ENCODE measurements at regions of chr19 and their contacts with region 1.

Region 1: DNA sequence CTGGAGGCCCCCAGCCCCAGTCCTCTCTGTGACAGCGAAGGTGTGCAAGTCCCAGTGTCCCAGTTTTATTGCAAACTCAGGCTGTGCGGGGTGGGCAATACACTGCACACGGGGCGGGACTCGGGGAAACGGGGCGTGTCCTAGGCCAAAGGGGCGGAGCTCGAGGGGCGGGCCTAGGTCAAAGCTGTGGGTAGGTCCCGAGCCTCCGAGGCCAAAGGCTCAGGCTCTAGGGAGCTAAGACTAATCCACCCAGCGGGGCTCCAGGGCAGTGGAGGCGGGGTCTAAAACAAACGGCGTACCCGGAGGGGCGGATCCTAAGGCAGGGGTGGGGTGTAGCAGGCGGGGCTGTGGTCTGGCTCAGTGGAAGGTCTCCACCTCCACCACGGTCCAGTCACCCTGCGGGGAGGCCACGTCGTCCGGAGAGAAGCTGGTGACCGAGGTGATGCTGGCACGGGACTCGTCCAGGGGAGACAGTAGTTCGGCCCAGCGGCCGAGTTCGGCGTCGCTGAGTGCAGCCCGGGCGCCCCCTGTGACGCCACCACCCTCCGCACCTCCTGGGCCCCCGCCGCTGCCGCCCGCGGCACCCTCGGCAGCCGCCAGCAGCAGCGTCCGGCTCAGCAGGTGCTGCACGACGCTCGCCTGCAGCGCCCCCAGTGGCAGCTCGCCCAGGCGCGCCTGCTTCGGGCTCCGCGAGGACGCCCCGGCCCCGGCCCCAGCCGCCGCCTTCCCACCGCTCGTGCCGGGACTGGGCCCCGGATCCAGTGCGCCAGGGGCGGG is 5.3 kb downstream of the PRR36 start:
- H3K4me3 ChIP-seq: peak overlapping the region; percentile 52
- H3K27ac ChIP-seq: peak overlapping the region; percentile 45; the same call in 1 of the 2 replicates
- H3K4me1 ChIP-seq: peaks cover 6% of the 10 kb centered on the region
- CTCF ChIP-seq: peak; percentile 72; the same call in 1 of the 2 replicates

Region 2: GRCh38 chr19:7799640-7800355 is 69.1 kb before region 1 on chr19:
- CTCF ChIA-PET with region 1: interaction called, 11 read pairs
- POLR2A ChIA-PET with region 1: no interaction called
- H3K4me3 ChIP-seq: no peak overlapping the region
- H3K27ac ChIP-seq: no peak overlapping the region
- H3K4me1 ChIP-seq: no peaks in the 10 kb centered on the region
- CTCF ChIP-seq: 0 out of 2 replicates have a peak, but pooled peaks have one; percentile 23

Region 3: DNA sequence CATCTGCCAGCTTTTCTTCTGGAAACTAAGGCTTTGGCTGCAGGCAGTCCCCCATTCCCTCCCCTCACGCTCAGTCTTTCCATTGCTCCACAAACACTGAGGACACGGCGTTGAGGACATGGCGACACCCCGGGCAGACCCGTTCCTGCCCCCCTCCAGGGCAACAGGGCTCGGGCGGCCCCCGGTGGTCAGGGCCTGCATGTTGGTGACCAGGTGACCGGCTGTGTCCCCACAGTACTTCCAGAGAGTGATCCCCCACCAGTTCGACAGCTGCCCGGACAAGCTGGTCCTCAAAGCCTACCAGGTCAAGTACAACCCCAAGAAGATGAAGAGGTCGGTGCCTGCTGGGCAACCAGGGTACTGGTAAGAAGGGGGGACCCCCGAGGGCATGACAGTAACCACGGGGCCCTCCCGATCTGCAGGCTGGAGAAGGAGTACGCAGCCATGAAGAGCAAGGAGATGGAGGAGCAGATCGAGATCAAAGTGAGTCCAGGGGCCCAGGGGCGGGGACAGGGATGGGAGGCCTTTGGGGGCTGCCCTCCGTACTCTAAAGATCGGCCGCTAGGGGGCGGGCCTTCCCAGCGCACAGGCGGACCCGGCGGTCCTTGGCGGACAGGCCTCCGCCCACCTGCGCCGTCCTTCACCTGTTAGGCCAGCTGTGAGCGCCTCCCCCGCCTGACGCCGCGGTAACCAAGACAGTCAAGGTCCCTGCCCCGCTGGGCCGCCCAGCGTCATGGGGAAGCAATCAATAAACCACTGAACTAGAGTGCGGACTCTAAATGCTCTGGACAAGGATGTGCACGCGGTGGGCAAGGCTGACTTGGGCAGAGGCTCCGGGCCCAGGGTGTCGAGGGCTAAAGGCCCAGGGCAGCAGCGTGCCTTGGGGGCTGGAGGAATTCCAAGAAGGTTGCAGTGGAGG is 15.8 kb before region 1 on chr19:
- CTCF ChIA-PET with region 1: interaction called, 21 read pairs
- POLR2A ChIA-PET with region 1: interaction called, 3 read pairs
- H3K4me3 ChIP-seq: no peak overlapping the region
- H3K27ac ChIP-seq: no peak overlapping the region
- H3K4me1 ChIP-seq: no peaks in the 10 kb centered on the region; the same call in 1 of the 2 replicates
- CTCF ChIP-seq: peak; percentile 89

Region 4: DNA sequence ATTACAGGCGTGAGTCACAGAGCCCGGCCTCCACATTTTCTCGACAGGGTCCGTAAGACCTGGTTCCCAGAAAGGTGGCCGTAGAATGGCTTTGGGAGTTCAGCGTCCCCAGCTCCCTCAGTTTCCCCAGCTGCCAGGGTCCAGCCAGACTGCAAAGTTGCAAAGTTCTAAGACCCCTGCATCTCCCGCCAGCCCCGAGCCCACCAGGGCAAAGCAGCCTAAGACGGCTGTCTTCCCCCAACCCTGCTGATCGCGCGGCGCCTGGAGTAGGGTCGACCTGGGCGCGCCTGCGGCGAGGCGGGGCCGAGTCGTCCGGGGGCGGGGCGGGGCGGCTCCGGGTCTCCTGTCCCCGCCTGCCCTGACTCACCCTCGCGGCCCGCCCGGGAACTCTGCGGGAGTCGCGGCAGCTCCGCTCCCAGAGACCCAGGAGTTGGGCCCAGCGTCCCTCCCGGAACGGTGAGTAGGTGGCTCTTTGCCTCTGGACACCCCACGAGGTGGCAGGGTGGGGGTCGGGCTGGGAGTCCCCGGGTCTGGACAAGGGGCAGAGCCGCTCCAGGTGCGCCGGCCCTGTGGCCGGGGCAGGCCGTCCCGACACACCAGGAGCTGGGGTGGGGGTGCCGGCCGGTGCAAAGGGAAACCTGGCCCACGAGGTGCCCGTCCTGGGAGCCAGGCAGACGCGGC is 19.4 kb after region 1 on chr19 and contains the start of gene LRRC8E:
- CTCF ChIA-PET with region 1: interaction called, 6 read pairs
- POLR2A ChIA-PET with region 1: interaction called, 30 read pairs
- H3K4me3 ChIP-seq: peak within 1 kb of the TSS; percentile 76
- H3K27ac ChIP-seq: peak within 1 kb of the TSS; percentile 54; the same call in 1 of the 2 replicates
- H3K4me1 ChIP-seq: peaks cover 9% of the 10 kb centered on the region; the same call in 1 of the 2 replicates
- CTCF ChIP-seq: no peak

Region 5: DNA sequence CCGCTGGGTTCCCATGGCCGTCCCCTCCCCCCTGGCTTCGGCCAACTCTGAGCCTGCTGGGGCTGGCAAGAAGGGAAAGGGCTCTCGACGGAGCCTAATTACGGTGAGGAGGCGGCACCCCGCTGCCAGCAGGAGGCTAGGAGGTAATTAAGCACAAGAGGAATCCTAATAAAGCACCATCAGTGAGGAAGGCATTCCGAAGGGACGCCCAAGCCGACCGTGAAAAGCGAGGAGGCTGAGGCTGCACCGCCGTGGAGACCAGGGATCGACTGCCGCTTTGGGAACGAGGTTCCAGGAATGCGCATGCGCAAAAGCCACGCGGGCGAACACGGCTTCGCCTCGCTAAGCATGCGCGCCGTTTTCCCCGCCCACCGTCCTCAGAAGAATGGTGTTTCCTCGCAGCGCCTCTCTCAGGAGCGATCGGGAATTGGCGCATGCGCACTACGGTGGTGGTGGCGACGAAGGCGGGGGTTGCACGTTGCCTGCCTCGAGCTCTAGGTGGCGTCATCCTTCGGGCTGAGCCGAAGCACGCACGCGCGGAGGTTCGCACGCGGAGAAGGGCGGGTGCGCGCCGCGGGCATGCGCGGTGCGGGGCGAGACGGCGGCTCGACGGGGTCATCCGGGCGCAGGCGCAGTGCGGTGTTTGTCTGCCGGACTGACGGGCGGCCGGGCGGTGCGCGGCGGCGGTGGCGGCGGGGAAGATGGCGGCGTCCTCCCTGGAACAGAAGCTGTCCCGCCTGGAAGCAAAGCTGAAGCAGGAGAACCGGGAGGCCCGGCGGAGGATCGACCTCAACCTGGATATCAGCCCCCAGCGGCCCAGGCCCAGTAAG is 34.6 kb after region 1 on chr19 and contains the start of gene MAP2K7:
- CTCF ChIA-PET with region 1: interaction called, 21 read pairs
- POLR2A ChIA-PET with region 1: interaction called, 18 read pairs
- H3K4me3 ChIP-seq: peak within 1 kb of the TSS; percentile 90
- H3K27ac ChIP-seq: peak within 1 kb of the TSS; percentile 80
- H3K4me1 ChIP-seq: peaks cover 5% of the 10 kb centered on the region; the same call in 1 of the 2 replicates
- CTCF ChIP-seq: peak; percentile 100

Measured in HEK293 (cell line).